ENCODE measurements at regions of chr17 and their contacts with region 1.

Region 1: DNA sequence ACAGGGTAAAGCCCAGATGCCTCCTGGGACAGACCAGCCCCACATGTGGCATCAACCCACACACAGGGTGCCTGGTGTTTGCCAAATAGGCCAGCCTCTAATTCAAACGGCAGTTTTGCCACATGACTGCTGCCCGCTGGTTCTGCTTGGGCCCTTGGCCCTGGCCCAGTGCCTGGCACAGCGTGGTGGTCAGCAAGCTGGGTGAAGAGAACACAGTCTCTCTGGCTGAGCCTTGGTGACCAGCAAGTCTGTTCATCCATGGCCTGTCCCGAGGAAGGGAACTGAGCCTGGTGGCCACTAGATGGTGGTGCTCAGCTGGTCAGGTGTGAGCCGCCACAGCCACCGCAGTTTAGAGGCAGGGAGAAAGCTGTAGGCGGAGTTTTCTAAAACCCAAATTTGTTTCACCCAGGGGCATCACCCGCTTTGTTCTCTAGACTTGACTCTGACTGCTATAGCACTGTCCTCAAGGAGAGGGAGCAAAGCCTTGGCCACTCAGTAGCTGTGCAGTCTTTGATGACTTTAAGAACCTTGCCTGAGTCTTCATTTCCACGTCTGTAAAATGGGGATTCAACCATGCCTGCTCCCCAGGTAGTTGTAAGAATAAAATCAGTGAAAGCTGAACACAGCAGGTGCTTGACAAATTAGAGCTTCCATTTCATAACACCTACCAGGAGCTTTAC is 4.7 kb upstream of the GFAP start:
- DNase-seq: peak; percentile 73
- ATAC-seq: peak; percentile 88
- H3K4me3 ChIP-seq: no peak overlapping the region
- H3K4me3 Mint-ChIP-seq: no peak overlapping the region
- H3K27ac ChIP-seq: no peak overlapping the region
- H3K27ac Mint-ChIP-seq: no peak overlapping the region
- H3K4me1 ChIP-seq: peaks cover 10 to 13% of the 10 kb centered on the region in 2 donors
- H3K4me1 Mint-ChIP-seq: peaks cover 12% of the 10 kb centered on the region
- H3K27me3 ChIP-seq: peaks cover 0 to 33% (median 6%) of the 10 kb centered on the region in 4 experiments
- H3K27me3 Mint-ChIP-seq: peaks cover 8% of the 10 kb centered on the region
- CTCF ChIP-seq: peak; percentile 61

Region 2: DNA sequence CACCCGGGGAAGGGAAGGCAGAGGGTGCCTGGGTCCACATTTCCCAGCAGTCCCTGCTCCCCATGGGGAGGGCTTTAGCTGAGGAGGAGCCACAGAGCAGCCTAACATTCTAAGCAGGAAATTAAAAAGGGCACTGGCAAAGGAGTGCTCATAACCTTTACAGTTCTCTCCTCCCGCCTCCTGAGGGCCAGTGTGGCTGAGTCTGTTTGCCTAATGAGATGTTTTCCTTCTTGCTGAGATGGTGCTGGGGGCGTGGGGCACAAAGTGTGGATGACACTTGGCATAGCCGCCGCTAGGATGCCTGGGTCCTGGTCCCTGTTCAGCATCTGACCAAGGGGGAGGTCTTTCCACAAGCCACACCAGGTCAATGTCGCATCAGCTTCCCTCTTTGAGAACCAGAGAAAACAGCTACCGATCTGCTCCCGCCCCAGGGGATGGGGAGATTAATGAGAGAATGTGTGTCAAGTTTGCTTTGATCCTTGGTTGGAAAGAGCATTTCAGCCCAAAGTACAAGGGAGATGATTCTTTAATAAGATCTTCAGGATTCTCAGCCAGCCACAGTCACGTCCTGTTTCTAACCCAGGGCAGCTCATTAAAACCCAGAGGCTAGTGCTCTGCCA is 21.8 kb after region 1 on chr17:
- CTCF ChIA-PET with region 1: no interaction called
- POLR2A ChIA-PET with region 1: no interaction called
- intact Hi-C with region 1: no loop called
- DNase-seq: no peak
- ATAC-seq: no peak
- H3K4me3 ChIP-seq: no peak overlapping the region
- H3K4me3 Mint-ChIP-seq: no peak overlapping the region
- H3K27ac ChIP-seq: no peak overlapping the region
- H3K27ac Mint-ChIP-seq: no peak overlapping the region
- H3K4me1 ChIP-seq: peaks cover 0 to under 1% of the 10 kb centered on the region in 2 donors
- H3K4me1 Mint-ChIP-seq: no peaks in the 10 kb centered on the region
- H3K27me3 ChIP-seq: peaks cover 0 to 4% (median 2%) of the 10 kb centered on the region in 4 experiments
- H3K27me3 Mint-ChIP-seq: peaks cover 6% of the 10 kb centered on the region
- CTCF ChIP-seq: no peak

Region 3: GRCh38 chr17:44997733-44998520 is 77.9 kb after region 1 on chr17:
- CTCF ChIA-PET with region 1: no interaction called
- POLR2A ChIA-PET with region 1: no interaction called
- intact Hi-C with region 1: no loop called
- DNase-seq: no peak
- ATAC-seq: no peak
- H3K4me3 ChIP-seq: no peak overlapping the region
- H3K4me3 Mint-ChIP-seq: no peak overlapping the region
- H3K27ac ChIP-seq: no peak overlapping the region
- H3K27ac Mint-ChIP-seq: no peak overlapping the region
- H3K4me1 ChIP-seq: no peaks in the 10 kb centered on the region
- H3K4me1 Mint-ChIP-seq: no peaks in the 10 kb centered on the region
- H3K27me3 ChIP-seq: peaks cover 0 to 31% (median 4%) of the 10 kb centered on the region in 4 experiments
- H3K27me3 Mint-ChIP-seq: peaks cover 46% of the 10 kb centered on the region
- CTCF ChIP-seq: no peak

Region 4: DNA sequence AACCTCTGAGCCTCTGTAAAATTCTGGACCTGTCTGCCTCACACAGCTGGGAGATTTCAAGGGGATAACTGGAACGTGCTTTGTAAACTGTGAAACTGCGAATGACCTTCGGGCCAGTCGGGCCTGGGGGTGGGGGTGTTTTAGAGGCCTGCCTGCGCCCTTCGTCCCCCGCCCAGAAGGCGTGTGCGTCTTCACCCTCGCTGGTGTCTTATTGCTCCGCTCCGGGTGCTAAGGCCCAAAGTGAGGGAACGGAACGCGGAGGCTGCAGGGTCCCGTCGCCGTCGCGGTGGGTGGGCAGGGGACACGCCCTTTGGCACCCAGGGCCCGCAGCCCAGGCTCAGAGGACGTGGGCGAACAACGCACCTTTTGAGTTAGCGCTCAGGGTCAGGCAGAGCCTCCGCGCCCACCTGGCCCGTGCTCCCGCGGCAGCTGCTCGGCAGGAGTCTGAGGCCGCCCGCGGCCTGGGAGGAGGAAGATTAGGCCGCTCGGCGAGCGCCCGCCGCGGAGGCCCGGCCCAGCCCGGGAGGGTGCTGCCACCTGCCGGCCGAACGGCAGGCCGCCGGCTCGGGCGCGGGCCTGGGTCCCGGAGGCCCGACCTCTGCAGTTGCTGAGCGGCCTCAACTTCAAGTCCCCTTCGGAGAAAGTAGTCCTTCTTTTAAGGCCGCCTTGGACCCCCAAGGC is 101.7 kb after region 1 on chr17:
- CTCF ChIA-PET with region 1: interaction called, 95 read pairs
- POLR2A ChIA-PET with region 1: no interaction called
- intact Hi-C with region 1: loop called (anchors 1 kb)
- DNase-seq: peak; percentile 82
- ATAC-seq: peak; percentile 84
- H3K4me3 ChIP-seq: peak overlapping the region in 4 of 5 experiments; percentile 28 to 53 (median 44)
- H3K4me3 Mint-ChIP-seq: peak overlapping the region; percentile 75
- H3K27ac ChIP-seq: no peak overlapping the region
- H3K27ac Mint-ChIP-seq: peak overlapping the region; percentile 60
- H3K4me1 ChIP-seq: peaks cover 27 to 28% of the 10 kb centered on the region in 2 donors
- H3K4me1 Mint-ChIP-seq: peaks cover 27% of the 10 kb centered on the region
- H3K27me3 ChIP-seq: peaks cover 0 to 43% (median 34%) of the 10 kb centered on the region in 4 experiments
- H3K27me3 Mint-ChIP-seq: peaks cover 33% of the 10 kb centered on the region
- CTCF ChIP-seq: peak; percentile 90

Region 5: GRCh38 chr17:45098869-45099616 is 179.0 kb after region 1 on chr17:
- CTCF ChIA-PET with region 1: interaction called, 62 read pairs
- POLR2A ChIA-PET with region 1: no interaction called
- intact Hi-C with region 1: no loop called
- DNase-seq: peak; percentile 78
- ATAC-seq: peak; percentile 84
- H3K4me3 ChIP-seq: no peak overlapping the region
- H3K4me3 Mint-ChIP-seq: no peak overlapping the region
- H3K27ac ChIP-seq: no peak overlapping the region
- H3K27ac Mint-ChIP-seq: peak overlapping the region; percentile 6
- H3K4me1 ChIP-seq: no peaks in the 10 kb centered on the region
- H3K4me1 Mint-ChIP-seq: peaks cover 7% of the 10 kb centered on the region
- H3K27me3 ChIP-seq: no peaks in the 10 kb centered on the region
- H3K27me3 Mint-ChIP-seq: no peaks in the 10 kb centered on the region
- CTCF ChIP-seq: peak; percentile 88

Region 6: DNA sequence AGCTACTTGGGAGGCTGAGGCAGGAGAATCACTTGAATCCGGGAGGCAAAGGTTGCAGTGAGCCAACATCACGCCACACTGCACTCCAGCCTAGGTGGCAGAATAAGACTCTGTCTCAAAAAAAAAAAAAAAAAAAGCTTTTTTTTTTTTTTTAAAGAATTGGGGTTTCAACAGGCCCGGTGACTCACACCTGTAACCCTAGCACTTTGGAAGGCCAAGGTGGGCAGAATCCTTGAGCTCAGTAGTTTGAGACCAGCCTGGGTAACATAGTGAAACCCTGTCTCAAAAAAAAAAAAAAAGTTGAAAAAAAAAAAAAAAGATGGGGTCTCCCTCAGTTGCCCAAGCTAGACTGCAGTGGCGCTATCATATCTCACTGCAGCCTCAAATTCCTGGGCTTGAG is 235.0 kb after region 1 on chr17:
- CTCF ChIA-PET with region 1: interaction called, 6 read pairs
- POLR2A ChIA-PET with region 1: interaction called, 12 read pairs
- intact Hi-C with region 1: no loop called
- DNase-seq: no peak
- ATAC-seq: no peak
- H3K4me3 ChIP-seq: no peak overlapping the region
- H3K4me3 Mint-ChIP-seq: no peak overlapping the region
- H3K27ac ChIP-seq: peak overlapping the region in 1 of 2 donors; percentile 60
- H3K27ac Mint-ChIP-seq: no peak overlapping the region
- H3K4me1 ChIP-seq: peaks cover 39 to 40% of the 10 kb centered on the region in 2 donors
- H3K4me1 Mint-ChIP-seq: peaks cover 49% of the 10 kb centered on the region
- H3K27me3 ChIP-seq: no peaks in the 10 kb centered on the region
- H3K27me3 Mint-ChIP-seq: no peaks in the 10 kb centered on the region
- CTCF ChIP-seq: no peak

Region 7: GRCh38 chr17:45197555-45198334 is 277.7 kb after region 1 on chr17:
- CTCF ChIA-PET with region 1: interaction called, 21 read pairs
- POLR2A ChIA-PET with region 1: no interaction called
- intact Hi-C with region 1: no loop called
- DNase-seq: peak; percentile 87
- ATAC-seq: peak; percentile 100
- H3K4me3 ChIP-seq: no peak overlapping the region
- H3K4me3 Mint-ChIP-seq: no peak overlapping the region
- H3K27ac ChIP-seq: no peak overlapping the region
- H3K27ac Mint-ChIP-seq: peak overlapping the region; percentile 15
- H3K4me1 ChIP-seq: peaks cover 0 to 6% of the 10 kb centered on the region in 2 donors
- H3K4me1 Mint-ChIP-seq: peaks cover 9% of the 10 kb centered on the region
- H3K27me3 ChIP-seq: no peaks in the 10 kb centered on the region
- H3K27me3 Mint-ChIP-seq: no peaks in the 10 kb centered on the region
- CTCF ChIP-seq: peak; percentile 97